ENCODE measurements at regions of chr4 and their contacts with region 1.

Region 1: GRCh38 chr4:186725469-186726425 is 2.1 kb upstream of the FAT1 start:
- DNase-seq: peak; percentile 65 to 72
- ATAC-seq: peak; percentile 59 to 77 (median 62)
- H3K4me3 ChIP-seq: peak overlapping the region; percentile 77
- H3K27ac ChIP-seq: peak overlapping the region; percentile 73
- H3K4me1 ChIP-seq: peaks cover 6% of the 10 kb centered on the region
- H3K27me3 ChIP-seq: peaks cover 0 to 55% (median 24%) of the 10 kb centered on the region in 3 donors
- CTCF ChIP-seq: peak; percentile 49

Region 2: GRCh38 chr4:186604124-186604807 is 121.5 kb before region 1 on chr4:
- intact Hi-C with region 1: no loop called
- DNase-seq: no peak
- ATAC-seq: no peak
- H3K4me3 ChIP-seq: no peak overlapping the region
- H3K27ac ChIP-seq: no peak overlapping the region
- H3K4me1 ChIP-seq: no peaks in the 10 kb centered on the region
- H3K27me3 ChIP-seq: no peaks in the 10 kb centered on the region
- CTCF ChIP-seq: no peak

Region 3: DNA sequence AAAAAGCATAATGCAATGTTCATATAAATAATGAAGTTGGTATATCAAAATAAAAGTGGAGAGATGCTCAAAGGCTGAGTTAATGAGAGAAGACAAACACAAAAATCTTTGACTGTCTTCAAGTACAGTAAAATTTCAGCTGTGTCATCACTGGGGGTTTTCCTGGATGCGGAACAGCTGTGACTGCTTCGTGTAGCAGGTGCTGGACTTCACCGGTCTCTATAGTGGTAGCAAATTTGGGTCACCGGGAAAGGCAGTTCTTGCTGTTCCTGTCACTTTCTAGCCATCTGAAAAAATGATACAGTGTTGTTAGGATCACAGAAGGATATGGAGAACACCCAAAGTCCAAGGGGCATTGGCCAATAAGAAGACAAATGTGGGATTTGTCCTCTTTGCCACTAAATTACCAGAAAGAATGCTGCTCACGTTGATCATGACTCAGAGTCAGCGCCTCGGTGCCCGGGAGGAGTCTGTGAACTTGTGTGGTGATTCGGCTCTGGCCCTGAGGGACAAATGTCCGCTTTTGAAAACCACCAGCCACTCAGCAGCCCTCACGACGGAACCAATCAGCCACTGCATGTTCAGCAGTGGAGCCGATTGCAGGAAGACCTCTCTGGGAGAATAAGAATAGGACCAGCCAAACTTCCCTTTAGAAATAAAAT is 228.0 kb after region 1 on chr4:
- intact Hi-C with region 1: loop called in 1 of 2 experiments (anchors 10 kb)
- DNase-seq: peak; percentile 62 to 75
- ATAC-seq: peak in 2 of 4 donors; percentile 25 to 48
- H3K4me3 ChIP-seq: no peak overlapping the region
- H3K27ac ChIP-seq: no peak overlapping the region
- H3K4me1 ChIP-seq: no peaks in the 10 kb centered on the region
- H3K27me3 ChIP-seq: no peaks in the 10 kb centered on the region
- CTCF ChIP-seq: no peak

Measured in psoas muscle (tissue), 8 donors.